Activated T-helper 1 cell treated with anti-CD3 and anti-CD28 coated beads, Interleukin-12 subunit alpha, Interleukin-12 subunit beta, Interleukin-2, Interleukin-4 antibody, amounts not matched to agents 30 ng/mL and 10 ng/mL and 1 ng/mL, durations not matched to agents 14 hours and 24 hours and 36 hours (primary cell): ENCODE measurements at regions of chr2 and their contacts with region 1.

Region 1: GRCh38 chr2:8408560-8409460 is 273.0 kb upstream of the ID2 start:
- DNase-seq: peak; percentile 49
- H3K4me3 Mint-ChIP-seq: peak overlapping the region; percentile 1
- H3K27ac Mint-ChIP-seq: peak overlapping the region; percentile 80
- H3K4me1 Mint-ChIP-seq: peaks cover 19% of the 10 kb centered on the region
- H3K27me3 Mint-ChIP-seq: peaks cover 15% of the 10 kb centered on the region

Region 2: DNA sequence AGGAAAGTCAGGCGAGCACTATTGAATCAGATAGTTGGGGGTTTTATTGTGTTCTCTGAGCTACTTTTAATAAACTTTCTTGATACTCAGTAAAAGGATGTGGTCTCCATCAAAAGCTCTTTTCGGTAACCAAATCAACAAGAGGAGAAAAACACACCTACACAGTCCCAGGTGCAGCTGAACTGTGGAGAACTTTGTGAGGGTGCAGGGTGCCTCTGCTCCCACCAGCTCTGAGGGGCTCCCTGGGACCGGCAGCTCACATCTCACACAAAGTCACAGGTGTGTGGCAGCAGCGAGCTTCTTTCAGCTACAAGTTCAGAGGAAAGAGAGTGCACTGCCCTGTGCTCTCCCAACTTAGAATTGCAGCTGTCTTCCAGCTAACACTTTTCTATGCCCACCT is 841.2 kb before region 1 on chr2:
- intact Hi-C with region 1: loop called (anchors 5 kb)
- DNase-seq: peak; percentile 47
- H3K4me3 Mint-ChIP-seq: peak overlapping the region; percentile 25
- H3K27ac Mint-ChIP-seq: peak overlapping the region; percentile 90
- H3K4me1 Mint-ChIP-seq: peaks cover 59% of the 10 kb centered on the region
- H3K27me3 Mint-ChIP-seq: no peaks in the 10 kb centered on the region

Region 3: DNA sequence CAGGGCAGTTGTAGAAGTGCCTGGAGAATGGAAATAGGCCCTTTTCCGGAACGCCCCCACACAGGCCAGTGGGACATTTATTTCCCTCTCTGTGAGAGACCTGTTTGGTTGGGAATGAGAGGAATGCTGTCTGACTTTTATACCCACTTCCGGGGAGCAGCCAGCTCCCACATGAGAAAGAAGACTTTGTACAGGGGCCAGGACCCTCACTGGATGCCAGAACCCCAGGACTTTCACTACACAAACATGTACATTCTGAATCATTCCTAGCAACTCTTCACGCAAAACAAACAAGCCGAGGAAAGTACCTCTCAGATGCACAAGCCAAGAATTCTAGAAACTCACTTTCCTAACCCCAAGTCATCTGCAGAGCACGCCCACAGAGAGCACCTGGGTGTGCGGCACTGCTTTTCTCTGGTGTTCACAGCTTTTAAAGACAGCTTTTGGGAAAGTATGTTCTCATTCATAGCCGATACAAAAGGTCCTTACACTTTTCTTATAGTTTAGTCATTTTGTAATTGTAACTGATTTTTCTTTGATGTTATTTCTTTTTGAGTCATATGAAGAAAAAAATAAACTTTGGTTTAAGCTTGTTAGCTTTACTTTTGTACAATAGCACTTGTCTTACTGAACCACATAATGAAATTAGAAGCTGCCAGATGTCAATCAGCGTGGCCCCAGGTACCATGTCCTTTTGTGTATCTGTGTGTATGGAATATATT is 583.1 kb before region 1 on chr2:
- intact Hi-C with region 1: loop called (anchors 1 kb)
- DNase-seq: peak; percentile 55
- H3K4me3 Mint-ChIP-seq: peak overlapping the region; percentile 23
- H3K27ac Mint-ChIP-seq: peak overlapping the region; percentile 97
- H3K4me1 Mint-ChIP-seq: peaks cover 41% of the 10 kb centered on the region
- H3K27me3 Mint-ChIP-seq: peaks cover 4% of the 10 kb centered on the region

Region 4: GRCh38 chr2:8049851-8050571 is 358.8 kb before region 1 on chr2:
- intact Hi-C with region 1: loop called (anchors 1 kb)
- DNase-seq: peak; percentile 52
- H3K4me3 Mint-ChIP-seq: peak overlapping the region; percentile 43
- H3K27ac Mint-ChIP-seq: peak overlapping the region; percentile 93
- H3K4me1 Mint-ChIP-seq: peaks cover 48% of the 10 kb centered on the region
- H3K27me3 Mint-ChIP-seq: no peaks in the 10 kb centered on the region

Region 5: DNA sequence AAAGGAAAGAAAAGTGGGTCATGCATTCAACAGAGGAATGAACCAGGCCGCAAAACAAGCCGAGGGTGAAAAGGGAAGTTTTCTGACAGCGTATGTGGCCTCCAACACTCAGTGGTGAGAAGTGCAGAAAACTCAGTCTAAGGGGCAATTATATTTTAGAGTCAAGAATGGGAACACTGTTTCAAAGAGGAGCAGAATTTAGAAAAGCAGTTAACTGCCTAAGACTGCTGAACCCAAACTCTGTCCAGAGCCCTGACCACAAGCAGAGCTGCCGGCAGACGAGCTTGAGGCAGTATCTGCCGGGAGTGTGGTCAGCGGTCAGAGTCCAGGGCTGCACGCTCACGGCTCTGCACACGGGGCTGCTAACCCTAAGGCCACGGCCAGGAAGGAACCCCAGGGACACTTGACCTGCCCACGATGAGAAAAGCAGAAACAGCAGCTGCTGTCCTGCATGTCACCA is 73.9 kb before region 1 on chr2:
- intact Hi-C with region 1: loop called (anchors 1 kb)
- DNase-seq: no peak
- H3K4me3 Mint-ChIP-seq: no peak overlapping the region
- H3K27ac Mint-ChIP-seq: no peak overlapping the region
- H3K4me1 Mint-ChIP-seq: peaks cover 15% of the 10 kb centered on the region
- H3K27me3 Mint-ChIP-seq: peaks cover 6% of the 10 kb centered on the region

Region 6: GRCh38 chr2:8488001-8488738 is 79.4 kb after region 1 on chr2:
- intact Hi-C with region 1: loop called (anchors 1 kb)
- DNase-seq: peak; percentile 57
- H3K4me3 Mint-ChIP-seq: peak overlapping the region; percentile 75
- H3K27ac Mint-ChIP-seq: peak overlapping the region; percentile 86
- H3K4me1 Mint-ChIP-seq: peaks cover 61% of the 10 kb centered on the region
- H3K27me3 Mint-ChIP-seq: no peaks in the 10 kb centered on the region